ENCODE measurements at regions of chr6 and their contacts with region 1.

Region 1: DNA sequence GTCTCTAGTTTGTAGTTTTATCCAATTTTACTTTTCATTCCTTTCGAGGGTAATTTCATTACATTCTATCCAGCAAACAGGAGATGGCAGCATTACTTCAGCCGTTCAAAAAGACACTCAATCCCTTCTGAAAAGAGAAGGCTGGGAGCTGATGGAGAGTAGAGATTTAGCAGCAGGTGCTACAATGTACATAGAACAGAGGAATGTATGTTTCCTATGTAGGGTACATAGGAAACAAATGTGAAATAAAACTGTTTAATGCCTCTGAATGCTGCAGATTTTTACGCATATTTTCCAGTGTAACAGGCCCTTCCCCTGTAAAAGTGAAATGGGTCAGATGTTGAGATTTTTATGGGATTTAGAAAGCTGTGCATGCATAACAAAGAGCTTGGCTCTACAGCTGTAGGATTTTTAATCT is 16.0 kb downstream of the RPS12 start:
- DNase-seq: no peak
- ATAC-seq: peak; percentile 78
- H3K4me3 ChIP-seq: no peak overlapping the region
- H3K27ac ChIP-seq: no peak overlapping the region
- H3K4me1 ChIP-seq: no peaks in the 10 kb centered on the region
- H3K27me3 ChIP-seq: no peaks in the 10 kb centered on the region
- CTCF ChIP-seq: peak; percentile 53 to 79 (median 70); a peak in 5 of 6 replicates
- POLR2A ChIP-seq: no peak
- RAD21 ChIP-seq: peak; percentile 89

Region 2: GRCh38 chr6:132937466-132937906 is 107.1 kb after region 1 on chr6:
- CTCF ChIA-PET with region 1: interaction called, 9 read pairs
- POLR2A ChIA-PET with region 1: no interaction called
- RAD21 ChIA-PET with region 1: no interaction called
- intact Hi-C with region 1: loop called (anchors 5 kb)
- DNase-seq: peak; percentile 57
- ATAC-seq: peak; percentile 91
- H3K4me3 ChIP-seq: 0 out of 4 replicates have a peak overlapping the region, but pooled peaks of 1 of the 2 experiments have one; percentile 2
- H3K27ac ChIP-seq: no peak overlapping the region
- H3K4me1 ChIP-seq: peaks cover 0 to 5% of the 10 kb centered on the region in 2 experiments; a peak in 2 of 4 replicates
- H3K27me3 ChIP-seq: peaks cover 6% of the 10 kb centered on the region; the same call in 1 of the 2 replicates
- CTCF ChIP-seq: peak; percentile 39 to 74 (median 68); a peak in 5 of 6 replicates
- POLR2A ChIP-seq: no peak
- RAD21 ChIP-seq: peak; percentile 64

Region 3: DNA sequence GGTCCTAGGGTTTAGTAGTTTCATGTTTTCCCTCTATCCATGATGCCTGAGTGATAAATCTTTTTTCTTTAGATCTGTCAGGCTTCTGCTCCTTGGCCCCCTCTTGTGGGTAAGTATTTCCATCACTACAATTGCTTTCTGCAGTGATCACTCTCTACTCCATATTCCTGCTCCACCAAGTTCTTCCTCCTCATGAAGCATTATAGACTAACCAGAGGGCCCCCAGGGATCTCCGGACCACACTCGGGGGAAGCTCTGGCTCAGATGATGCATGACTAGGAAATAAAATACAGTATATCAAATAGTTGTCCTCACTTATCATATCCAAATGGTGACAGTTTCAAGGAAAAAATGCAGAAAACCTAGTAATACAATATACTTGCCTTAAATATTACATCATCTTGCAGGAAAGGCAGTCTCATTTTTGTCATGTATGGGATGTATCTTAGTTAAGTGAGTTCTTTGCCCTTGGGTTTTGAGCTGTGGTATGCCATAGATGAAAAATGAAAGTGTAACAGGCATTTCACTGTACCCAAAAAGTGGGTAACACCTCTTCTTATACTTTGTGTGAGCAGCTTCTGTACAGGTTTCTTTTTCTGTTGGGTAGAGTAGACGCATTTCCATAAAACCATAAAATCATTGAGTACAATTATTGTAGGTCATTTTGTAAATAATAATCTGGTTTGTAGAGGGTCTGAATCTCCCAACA is 209.9 kb after region 1 on chr6:
- CTCF ChIA-PET with region 1: interaction called, 3 read pairs
- POLR2A ChIA-PET with region 1: no interaction called
- RAD21 ChIA-PET with region 1: no interaction called
- intact Hi-C with region 1: loop called (anchors 2 kb)
- DNase-seq: peak; percentile 16
- ATAC-seq: peak; percentile 83
- H3K4me3 ChIP-seq: no peak overlapping the region
- H3K27ac ChIP-seq: no peak overlapping the region
- H3K4me1 ChIP-seq: no peaks in the 10 kb centered on the region
- H3K27me3 ChIP-seq: no peaks in the 10 kb centered on the region
- CTCF ChIP-seq: peak; percentile 26 to 64 (median 54); a peak in 4 of 6 replicates
- POLR2A ChIP-seq: no peak
- RAD21 ChIP-seq: peak; percentile 44

Region 4: GRCh38 chr6:133184798-133185372 is 354.5 kb after region 1 on chr6:
- CTCF ChIA-PET with region 1: interaction called, 6 read pairs
- POLR2A ChIA-PET with region 1: no interaction called
- RAD21 ChIA-PET with region 1: no interaction called
- intact Hi-C with region 1: loop called (anchors 10 kb)
- DNase-seq: no peak
- ATAC-seq: peak; percentile 57; the same call in 1 of the 2 replicates
- H3K4me3 ChIP-seq: no peak overlapping the region
- H3K27ac ChIP-seq: no peak overlapping the region
- H3K4me1 ChIP-seq: no peaks in the 10 kb centered on the region
- H3K27me3 ChIP-seq: peaks cover 21% of the 10 kb centered on the region
- CTCF ChIP-seq: peak; percentile 38 to 69 (median 50); a peak in 5 of 6 replicates
- POLR2A ChIP-seq: no peak
- RAD21 ChIP-seq: peak; percentile 58

Region 5: GRCh38 chr6:133512410-133513016 is 682.2 kb after region 1 on chr6:
- CTCF ChIA-PET with region 1: interaction called, 4 read pairs
- POLR2A ChIA-PET with region 1: no interaction called
- RAD21 ChIA-PET with region 1: no interaction called
- intact Hi-C with region 1: loop called (anchors 1 kb)
- DNase-seq: peak; percentile 44
- ATAC-seq: peak; percentile 75
- H3K4me3 ChIP-seq: no peak overlapping the region
- H3K27ac ChIP-seq: no peak overlapping the region
- H3K4me1 ChIP-seq: no peaks in the 10 kb centered on the region
- H3K27me3 ChIP-seq: no peaks in the 10 kb centered on the region
- CTCF ChIP-seq: peak; percentile 58 to 84 (median 72)
- POLR2A ChIP-seq: no peak
- RAD21 ChIP-seq: peak; percentile 86

Region 6: GRCh38 chr6:133553652-133554051 is 723.3 kb after region 1 on chr6:
- CTCF ChIA-PET with region 1: interaction called, 14 read pairs
- POLR2A ChIA-PET with region 1: no interaction called
- RAD21 ChIA-PET with region 1: no interaction called
- intact Hi-C with region 1: loop called (anchors 1 kb)
- DNase-seq: peak; percentile 56
- ATAC-seq: peak; percentile 86
- H3K4me3 ChIP-seq: no peak overlapping the region
- H3K27ac ChIP-seq: no peak overlapping the region
- H3K4me1 ChIP-seq: 0 out of 4 replicates have a peak, but pooled peaks cover 0 to 3% of the 10 kb centered on the region in 2 experiments
- H3K27me3 ChIP-seq: no peaks in the 10 kb centered on the region
- CTCF ChIP-seq: peak; percentile 54 to 64 (median 63)
- POLR2A ChIP-seq: no peak
- RAD21 ChIP-seq: peak; percentile 77

Region 7: GRCh38 chr6:133916650-133917151 is 1086.4 kb after region 1 on chr6:
- CTCF ChIA-PET with region 1: interaction called, 6 read pairs
- POLR2A ChIA-PET with region 1: no interaction called
- RAD21 ChIA-PET with region 1: no interaction called
- intact Hi-C with region 1: loop called (anchors 1 kb)
- DNase-seq: peak; percentile 85
- ATAC-seq: peak; percentile 89
- H3K4me3 ChIP-seq: peak overlapping the region in 1 of 2 experiments; percentile 31; a peak in 1 of 4 replicates
- H3K27ac ChIP-seq: peak overlapping the region; percentile 41; the same call in 1 of the 2 replicates
- H3K4me1 ChIP-seq: peaks cover 8 to 12% of the 10 kb centered on the region in 2 experiments
- H3K27me3 ChIP-seq: no peaks in the 10 kb centered on the region
- CTCF ChIP-seq: peak; percentile 94 to 96 (median 96)
- POLR2A ChIP-seq: no peak
- RAD21 ChIP-seq: peak; percentile 97